ENCODE measurements at regions of chr12 and their contacts with region 1.

Region 1: DNA sequence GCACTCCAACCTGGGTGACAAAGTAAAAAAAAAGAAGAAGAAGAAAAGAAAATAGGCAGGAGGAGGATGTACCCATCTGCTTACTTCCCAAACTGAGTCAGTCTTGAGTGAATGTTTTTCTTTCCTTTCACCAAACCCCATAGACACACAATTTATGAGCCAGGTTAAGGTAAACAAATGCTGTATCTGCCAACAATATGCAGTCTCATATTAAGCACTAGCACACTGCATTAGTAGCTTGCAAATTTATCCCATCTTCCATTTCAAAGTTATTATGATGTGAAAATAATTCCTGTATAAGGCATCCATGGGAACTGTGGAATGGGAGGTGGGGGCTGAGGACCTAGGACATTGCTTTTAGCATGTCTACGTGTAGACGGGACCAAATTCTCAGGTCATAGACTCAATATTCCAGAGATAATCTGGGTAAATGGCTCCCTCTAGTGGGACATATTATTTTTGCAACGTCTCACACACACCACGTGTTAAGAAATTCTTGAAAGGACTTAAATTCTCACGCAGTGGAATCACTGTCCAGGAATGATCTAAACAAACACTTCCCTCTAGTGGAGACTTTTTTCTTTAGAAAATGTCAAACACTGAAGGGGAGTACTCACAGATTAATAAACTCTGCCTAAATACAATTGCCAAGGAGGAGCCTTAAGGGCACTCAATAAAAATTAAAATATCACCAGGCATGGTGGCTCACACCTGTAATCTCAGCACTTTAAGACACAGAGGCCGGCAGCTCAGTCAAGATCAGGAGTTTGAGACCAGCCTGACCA is 17.1 kb upstream of the OR10P1 start:
- DNase-seq: no peak
- ATAC-seq: peak; percentile 93
- H3K4me3 Mint-ChIP-seq: no peak overlapping the region
- H3K27ac Mint-ChIP-seq: no peak overlapping the region
- H3K4me1 Mint-ChIP-seq: peaks cover 5% of the 10 kb centered on the region
- H3K27me3 Mint-ChIP-seq: peaks cover 7% of the 10 kb centered on the region
- CTCF ChIP-seq: peak; percentile 79

Region 2: GRCh38 chr12:55188974-55189556 is 430.5 kb before region 1 on chr12:
- CTCF ChIA-PET with region 1: interaction called, 10 read pairs
- POLR2A ChIA-PET with region 1: no interaction called
- DNase-seq: no peak
- ATAC-seq: peak; percentile 73; the same call in 1 of the 2 replicates
- H3K4me3 Mint-ChIP-seq: no peak overlapping the region
- H3K27ac Mint-ChIP-seq: no peak overlapping the region
- H3K4me1 Mint-ChIP-seq: no peaks in the 10 kb centered on the region
- H3K27me3 Mint-ChIP-seq: no peaks in the 10 kb centered on the region
- CTCF ChIP-seq: peak; percentile 68

Region 3: GRCh38 chr12:55446326-55446725 is 173.2 kb before region 1 on chr12:
- CTCF ChIA-PET with region 1: interaction called, 10 read pairs
- POLR2A ChIA-PET with region 1: no interaction called
- DNase-seq: no peak
- ATAC-seq: no peak
- H3K4me3 Mint-ChIP-seq: no peak overlapping the region
- H3K27ac Mint-ChIP-seq: no peak overlapping the region
- H3K4me1 Mint-ChIP-seq: no peaks in the 10 kb centered on the region
- H3K27me3 Mint-ChIP-seq: no peaks in the 10 kb centered on the region; the same call in 1 of the 2 replicates
- CTCF ChIP-seq: no peak

Region 4: GRCh38 chr12:55743116-55743921 is 123.8 kb after region 1 on chr12 and contains the start of gene GDF11:
- CTCF ChIA-PET with region 1: no interaction called
- POLR2A ChIA-PET with region 1: no interaction called
- DNase-seq: peak; percentile 67
- ATAC-seq: peak; percentile 7
- H3K4me3 Mint-ChIP-seq: peak within 1 kb of the TSS; percentile 97
- H3K27ac Mint-ChIP-seq: peak within 1 kb of the TSS; percentile 82
- H3K4me1 Mint-ChIP-seq: peaks cover 48% of the 10 kb centered on the region
- H3K27me3 Mint-ChIP-seq: peaks cover 2% of the 10 kb centered on the region; the same call in 1 of the 2 replicates
- CTCF ChIP-seq: no peak
- total RNA-seq, gene GDF11: 16.9 to 20.7 TPM (median 19.6 TPM) in 3 replicates

Region 5: DNA sequence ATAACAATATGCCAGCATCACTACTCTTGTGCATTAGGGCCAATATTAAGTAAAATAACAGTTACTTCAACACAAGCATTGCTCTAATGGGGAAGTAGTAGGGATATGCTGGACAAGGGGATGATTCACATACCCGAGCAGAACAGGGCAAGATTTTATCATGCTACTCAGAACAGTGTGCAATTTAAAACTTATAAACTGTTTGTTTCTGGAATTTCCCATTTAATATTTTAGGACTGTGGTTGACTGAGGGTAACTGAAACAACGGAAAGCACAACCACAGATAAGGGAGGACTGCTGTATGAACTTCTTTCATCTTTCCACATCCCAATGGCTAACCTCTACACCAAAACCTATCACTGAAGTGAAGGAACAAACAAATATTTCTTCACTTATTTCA is 161.1 kb after region 1 on chr12:
- CTCF ChIA-PET with region 1: no interaction called
- POLR2A ChIA-PET with region 1: no interaction called
- DNase-seq: no peak
- ATAC-seq: no peak
- H3K4me3 Mint-ChIP-seq: no peak overlapping the region
- H3K27ac Mint-ChIP-seq: no peak overlapping the region
- H3K4me1 Mint-ChIP-seq: no peaks in the 10 kb centered on the region
- H3K27me3 Mint-ChIP-seq: no peaks in the 10 kb centered on the region
- CTCF ChIP-seq: no peak

Measured in WTC11 (cell line).